CD4-positive, alpha-beta T cell (primary cell): ENCODE measurements at regions of chr19 and their contacts with region 1.

Region 1: DNA sequence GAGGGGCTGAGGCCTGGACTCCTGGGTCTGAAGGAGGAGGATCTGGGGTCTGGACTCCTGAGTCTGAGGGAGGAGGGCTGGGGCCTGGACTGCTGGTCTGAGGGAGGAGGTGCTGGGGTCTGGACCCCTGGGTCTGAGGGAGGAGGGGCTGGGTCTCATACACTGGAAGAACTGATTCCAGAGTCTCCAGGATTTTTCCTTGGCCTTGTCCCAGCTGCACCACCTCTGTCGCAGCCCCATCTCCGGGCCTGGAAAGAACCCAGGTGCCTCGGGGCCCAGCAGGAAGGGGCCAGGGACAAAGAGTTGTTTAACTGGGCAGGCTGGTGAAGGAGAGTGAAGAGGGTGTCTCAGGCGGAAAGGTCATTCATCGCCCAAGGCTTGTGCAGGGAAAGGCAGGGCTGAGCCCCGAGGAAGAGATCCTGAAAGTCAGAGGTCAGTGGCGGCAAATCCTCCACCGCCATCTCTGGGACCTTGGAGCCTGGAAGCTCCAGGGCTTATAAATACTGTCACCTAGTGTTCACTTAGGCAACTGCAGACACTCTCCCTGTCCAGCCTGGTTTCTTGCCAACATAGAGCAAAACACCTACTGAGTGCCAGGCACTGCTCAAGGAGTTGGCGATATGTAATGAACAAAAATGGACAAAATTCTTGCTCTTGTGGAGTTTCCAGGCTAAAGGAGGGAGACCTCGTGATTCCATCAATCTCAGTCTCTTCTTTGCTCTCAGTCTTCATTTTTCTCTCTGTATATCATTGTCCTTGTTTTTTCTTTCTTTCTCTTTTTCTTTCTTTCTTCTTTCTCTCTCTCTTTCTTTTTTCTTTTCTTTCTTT is 4.4 kb upstream of the KCNN4 start:
- DNase-seq: peak in 11 of 14 experiments; percentile 21 to 83 (median 41)
- ATAC-seq: peak; percentile 51
- H3K4me3 ChIP-seq: peak overlapping the region; percentile 3
- H3K4me3 Mint-ChIP-seq: peak overlapping the region; percentile 71
- H3K27ac ChIP-seq: peak overlapping the region; percentile 70 to 75
- H3K27ac Mint-ChIP-seq: peak overlapping the region; percentile 90
- H3K4me1 ChIP-seq: peaks cover 50% of the 10 kb centered on the region
- H3K4me1 Mint-ChIP-seq: peaks cover 45% of the 10 kb centered on the region
- H3K27me3 ChIP-seq: no peaks in the 10 kb centered on the region
- H3K27me3 Mint-ChIP-seq: peaks cover 5% of the 10 kb centered on the region
- CTCF ChIP-seq: peak; percentile 95

Region 2: GRCh38 chr19:43651758-43652545 is 133.2 kb before region 1 on chr19:
- CTCF ChIA-PET with region 1: no interaction called
- POLR2A ChIA-PET with region 1: no interaction called
- intact Hi-C with region 1: no loop called
- DNase-seq: peak in 8 of 14 experiments; percentile 5 to 72 (median 40)
- ATAC-seq: peak; percentile 32
- H3K4me3 ChIP-seq: no peak overlapping the region
- H3K4me3 Mint-ChIP-seq: no peak overlapping the region
- H3K27ac ChIP-seq: no peak overlapping the region
- H3K27ac Mint-ChIP-seq: no peak overlapping the region
- H3K4me1 ChIP-seq: no peaks in the 10 kb centered on the region
- H3K4me1 Mint-ChIP-seq: no peaks in the 10 kb centered on the region
- H3K27me3 ChIP-seq: no peaks in the 10 kb centered on the region
- H3K27me3 Mint-ChIP-seq: no peaks in the 10 kb centered on the region
- CTCF ChIP-seq: peak; percentile 58

Region 3: GRCh38 chr19:43675269-43675879 is 109.8 kb before region 1 on chr19:
- CTCF ChIA-PET with region 1: no interaction called
- POLR2A ChIA-PET with region 1: no interaction called
- intact Hi-C with region 1: loop called in 1 of 2 experiments (anchors 10 kb)
- DNase-seq: peak in 2 of 14 experiments; percentile 40 to 54
- ATAC-seq: no peak
- H3K4me3 ChIP-seq: no peak overlapping the region
- H3K4me3 Mint-ChIP-seq: no peak overlapping the region
- H3K27ac ChIP-seq: no peak overlapping the region
- H3K27ac Mint-ChIP-seq: no peak overlapping the region
- H3K4me1 ChIP-seq: peaks cover 7% of the 10 kb centered on the region
- H3K4me1 Mint-ChIP-seq: peaks cover 6% of the 10 kb centered on the region
- H3K27me3 ChIP-seq: no peaks in the 10 kb centered on the region
- H3K27me3 Mint-ChIP-seq: no peaks in the 10 kb centered on the region
- CTCF ChIP-seq: no peak

Region 4: GRCh38 chr19:43754503-43755255 is 30.5 kb before region 1 on chr19 and contains the start of gene SMG9:
- CTCF ChIA-PET with region 1: interaction called, 9 read pairs
- POLR2A ChIA-PET with region 1: interaction called, 43 read pairs
- intact Hi-C with region 1: no loop called
- DNase-seq: peak; percentile 96 to 100 (median 98)
- ATAC-seq: peak; percentile 79
- H3K4me3 ChIP-seq: peak within 1 kb of the TSS; percentile 95
- H3K4me3 Mint-ChIP-seq: peak within 1 kb of the TSS; percentile 98
- H3K27ac ChIP-seq: peak within 1 kb of the TSS; percentile 97 to 99
- H3K27ac Mint-ChIP-seq: peak within 1 kb of the TSS; percentile 95
- H3K4me1 ChIP-seq: peaks cover 42% of the 10 kb centered on the region
- H3K4me1 Mint-ChIP-seq: peaks cover 43% of the 10 kb centered on the region
- H3K27me3 ChIP-seq: no peaks in the 10 kb centered on the region
- H3K27me3 Mint-ChIP-seq: no peaks in the 10 kb centered on the region
- CTCF ChIP-seq: no peak
- total RNA-seq, gene SMG9: 34.7 to 38.2 TPM

Region 5: DNA sequence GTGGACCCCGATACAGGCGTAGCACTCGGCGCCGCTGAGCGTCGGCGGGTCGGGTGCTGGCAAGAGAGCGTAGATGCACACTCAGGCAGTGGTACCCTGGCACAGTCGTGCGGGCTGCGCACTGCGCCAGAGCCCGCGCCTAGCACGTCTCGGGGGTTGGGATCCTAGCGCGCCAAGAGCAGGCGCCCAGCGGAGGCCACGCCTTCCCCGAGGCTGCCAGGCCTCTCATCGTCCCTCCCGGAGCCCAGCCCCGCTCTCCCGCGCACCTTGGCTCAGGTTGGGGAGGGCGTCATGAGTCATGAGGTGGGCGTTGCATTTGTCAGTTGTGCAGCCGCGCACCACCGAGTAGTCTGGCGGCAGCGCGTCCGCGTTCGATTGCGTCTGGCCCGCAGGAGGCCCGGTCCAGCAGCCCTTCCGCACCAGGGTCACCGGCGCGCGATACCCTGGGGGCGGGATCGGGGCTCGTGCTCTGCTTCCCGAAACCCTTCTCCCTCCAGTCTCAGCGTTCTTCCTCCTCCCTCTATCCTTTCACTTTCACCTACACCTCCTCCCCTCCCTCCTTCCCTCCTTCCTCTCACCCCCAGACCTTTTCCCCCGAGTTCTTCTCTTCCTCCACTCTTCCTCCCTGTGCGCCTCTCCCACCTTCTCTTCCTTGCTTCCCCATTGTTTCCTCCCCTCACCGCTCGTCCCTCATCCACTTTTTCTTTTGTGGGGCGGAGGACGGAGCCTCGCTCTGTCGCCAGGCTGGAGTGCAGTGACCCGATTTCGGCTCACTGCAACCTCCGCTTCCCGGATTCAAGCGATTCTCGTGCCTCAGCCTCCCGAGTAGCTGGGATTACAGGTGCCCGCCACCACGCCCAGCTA is 13.6 kb after region 1 on chr19:
- CTCF ChIA-PET with region 1: no interaction called
- POLR2A ChIA-PET with region 1: no interaction called
- intact Hi-C with region 1: no loop called
- DNase-seq: peak in 12 of 14 experiments; percentile 33 to 80 (median 58)
- ATAC-seq: peak; percentile 89
- H3K4me3 ChIP-seq: peak overlapping the region; percentile 59
- H3K4me3 Mint-ChIP-seq: peak overlapping the region; percentile 79
- H3K27ac ChIP-seq: no peak overlapping the region
- H3K27ac Mint-ChIP-seq: no peak overlapping the region
- H3K4me1 ChIP-seq: peaks cover 13% of the 10 kb centered on the region
- H3K4me1 Mint-ChIP-seq: peaks cover 6% of the 10 kb centered on the region
- H3K27me3 ChIP-seq: peaks cover 0 to 3% of the 10 kb centered on the region in 2 experiments
- H3K27me3 Mint-ChIP-seq: peaks cover 44% of the 10 kb centered on the region
- CTCF ChIP-seq: no peak

Region 6: GRCh38 chr19:44002566-44003460 is 217.6 kb after region 1 on chr19 and contains the start of gene ZNF230:
- CTCF ChIA-PET with region 1: no interaction called
- POLR2A ChIA-PET with region 1: no interaction called
- intact Hi-C with region 1: no loop called
- DNase-seq: peak; percentile 56 to 96 (median 75)
- ATAC-seq: peak; percentile 97
- H3K4me3 ChIP-seq: peak within 1 kb of the TSS; percentile 84
- H3K4me3 Mint-ChIP-seq: peak within 1 kb of the TSS; percentile 100
- H3K27ac ChIP-seq: peak within 1 kb of the TSS; percentile 39 to 53
- H3K27ac Mint-ChIP-seq: peak within 1 kb of the TSS; percentile 90
- H3K4me1 ChIP-seq: peaks cover 18% of the 10 kb centered on the region
- H3K4me1 Mint-ChIP-seq: peaks cover 29% of the 10 kb centered on the region
- H3K27me3 ChIP-seq: no peaks in the 10 kb centered on the region
- H3K27me3 Mint-ChIP-seq: no peaks in the 10 kb centered on the region
- CTCF ChIP-seq: no peak
- total RNA-seq, gene ZNF230: 2.2 to 2.8 TPM

Region 7: GRCh38 chr19:44356383-44357111 is 571.4 kb after region 1 on chr19 and contains the start of gene ZNF112:
- CTCF ChIA-PET with region 1: no interaction called
- POLR2A ChIA-PET with region 1: no interaction called
- intact Hi-C with region 1: no loop called
- DNase-seq: peak in 4 of 14 experiments; percentile 5 to 40 (median 11)
- ATAC-seq: no peak
- H3K4me3 ChIP-seq: peak within 1 kb of the TSS; percentile 39
- H3K4me3 Mint-ChIP-seq: peak within 1 kb of the TSS; percentile 64
- H3K27ac ChIP-seq: no peak within 1 kb of the TSS
- H3K27ac Mint-ChIP-seq: no peak within 1 kb of the TSS
- H3K4me1 ChIP-seq: peaks cover 6% of the 10 kb centered on the region
- H3K4me1 Mint-ChIP-seq: peaks cover 5% of the 10 kb centered on the region
- H3K27me3 ChIP-seq: no peaks in the 10 kb centered on the region
- H3K27me3 Mint-ChIP-seq: peaks cover 6% of the 10 kb centered on the region
- CTCF ChIP-seq: no peak
- total RNA-seq, gene ZNF112: 0.08 TPM in 1 of 2 experiments, not detected in the other